Right cardiac atrium (tissue), 5 donors: ENCODE measurements at regions of chr12 and their contacts with region 1.

Region 1: GRCh38 chr12:122635471-122635870 is 67.7 kb downstream of the HCAR2 start:
- DNase-seq: no peak
- ATAC-seq: no peak
- H3K4me3 ChIP-seq: no peak overlapping the region
- H3K27ac ChIP-seq: no peak overlapping the region
- H3K4me1 ChIP-seq: no peaks in the 10 kb centered on the region
- H3K27me3 ChIP-seq: no peaks in the 10 kb centered on the region

Region 2: DNA sequence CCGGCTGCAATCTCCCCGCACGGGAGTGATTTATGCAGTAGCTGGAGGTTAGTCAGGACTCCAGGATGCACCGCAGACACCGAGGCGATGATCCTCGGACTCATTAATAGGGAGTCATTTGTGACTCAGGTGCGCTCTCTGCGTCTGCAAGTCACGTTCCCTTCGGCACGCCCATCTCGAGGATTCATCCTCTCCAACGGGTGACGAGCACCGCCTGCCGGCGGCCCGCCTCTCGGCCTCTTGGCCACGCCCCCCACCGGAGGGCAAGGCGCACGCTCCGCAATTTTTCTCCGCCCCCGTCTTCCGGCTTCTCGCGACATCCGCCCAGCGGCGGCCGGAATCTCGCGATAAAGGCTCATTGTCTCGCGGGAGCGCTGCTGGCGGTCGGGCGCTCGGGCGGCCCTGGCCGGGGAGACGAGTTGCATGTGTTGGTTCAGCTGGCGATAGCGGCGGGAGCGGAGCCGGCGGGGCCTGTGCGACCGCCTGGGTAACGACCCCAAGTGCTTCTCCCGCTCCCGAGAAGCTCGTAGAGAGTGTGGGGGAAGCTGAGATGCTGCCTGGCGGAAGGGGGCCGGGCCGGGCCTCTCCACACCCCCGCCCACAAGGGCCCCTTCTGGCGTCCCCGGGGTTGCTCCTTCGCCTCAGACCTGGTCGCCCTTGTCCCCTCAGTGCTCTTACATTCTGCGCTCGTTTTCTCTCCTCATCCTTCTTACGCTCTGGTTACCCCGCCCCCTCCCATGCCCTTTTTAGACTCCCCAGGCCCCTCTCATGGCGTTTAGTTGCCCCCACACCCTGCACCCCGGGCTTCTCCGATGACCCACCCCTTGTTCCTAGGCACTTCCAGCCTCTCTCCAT is 117.2 kb after region 1 on chr12 and contains the start of gene DENR:
- intact Hi-C with region 1: loop called in 1 of 4 experiments (anchors 5 kb)
- DNase-seq: peak; percentile 98 to 99 (median 99)
- ATAC-seq: peak; percentile 98
- H3K4me3 ChIP-seq: peak within 1 kb of the TSS; percentile 70
- H3K27ac ChIP-seq: peak within 1 kb of the TSS; percentile 28
- H3K4me1 ChIP-seq: no peaks in the 10 kb centered on the region
- H3K27me3 ChIP-seq: no peaks in the 10 kb centered on the region
- total RNA-seq, gene DENR: 25.1 to 26.5 (median 26.0) TPM

Region 3: DNA sequence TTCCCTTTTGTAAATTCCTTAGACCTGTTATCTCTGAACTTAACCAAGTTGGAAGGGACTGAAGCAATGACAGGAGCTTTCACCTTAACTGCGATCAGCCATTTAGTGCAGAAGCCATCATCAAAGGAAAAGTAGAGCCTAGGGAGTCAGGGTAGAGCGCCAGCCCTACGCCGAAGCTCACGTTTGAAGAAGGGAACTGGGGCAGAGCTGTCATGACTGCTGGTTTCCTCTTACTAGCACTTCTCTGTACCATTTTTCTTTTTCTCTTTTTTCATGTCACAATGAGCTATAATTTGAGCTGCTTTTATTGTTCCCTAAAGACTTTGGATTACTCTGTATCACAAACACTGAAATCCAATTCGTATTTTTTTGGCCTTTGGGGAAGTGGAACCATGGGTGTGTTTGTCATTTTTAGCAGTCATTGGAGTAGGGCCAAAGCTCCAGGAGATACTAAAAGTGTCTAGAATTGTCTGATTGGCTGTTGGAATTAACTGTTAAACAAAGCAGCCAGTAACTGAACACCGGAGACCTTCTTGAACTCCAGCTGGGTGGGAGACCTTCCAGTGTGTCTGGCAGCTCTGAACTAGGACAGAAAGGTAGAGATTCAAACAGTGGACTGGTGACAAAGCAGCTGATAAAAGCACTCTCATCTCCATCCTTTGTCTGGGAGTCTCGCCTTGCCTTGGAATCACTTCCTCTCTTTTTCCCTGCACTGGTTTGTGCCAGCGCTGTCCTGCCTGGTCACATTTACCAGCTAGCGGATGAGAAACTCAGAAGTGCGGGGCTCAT is 606.8 kb after region 1 on chr12:
- intact Hi-C with region 1: loop called in 1 of 4 experiments (anchors 10 kb)
- DNase-seq: peak in 1 of 3 donors; percentile 14
- ATAC-seq: peak; percentile 70 to 82
- H3K4me3 ChIP-seq: no peak overlapping the region
- H3K27ac ChIP-seq: peak overlapping the region; percentile 34
- H3K4me1 ChIP-seq: peaks cover 6% of the 10 kb centered on the region
- H3K27me3 ChIP-seq: no peaks in the 10 kb centered on the region